Pancreas (tissue), 10 donors: ENCODE measurements at regions of chr5 and their contacts with region 1.

Region 1: GRCh38 chr5:140372971-140373487 is 13.0 kb downstream of the SLC4A9 start:
- DNase-seq: peak; percentile 59 to 74 (median 68)
- ATAC-seq: peak; percentile 84 to 98 (median 95)
- H3K4me3 ChIP-seq: no peak overlapping the region
- H3K27ac ChIP-seq: no peak overlapping the region
- H3K4me1 ChIP-seq: no peaks in the 10 kb centered on the region
- H3K27me3 ChIP-seq: no peaks in the 10 kb centered on the region
- CTCF ChIP-seq: peak; percentile 52 to 74 (median 70)

Region 2: DNA sequence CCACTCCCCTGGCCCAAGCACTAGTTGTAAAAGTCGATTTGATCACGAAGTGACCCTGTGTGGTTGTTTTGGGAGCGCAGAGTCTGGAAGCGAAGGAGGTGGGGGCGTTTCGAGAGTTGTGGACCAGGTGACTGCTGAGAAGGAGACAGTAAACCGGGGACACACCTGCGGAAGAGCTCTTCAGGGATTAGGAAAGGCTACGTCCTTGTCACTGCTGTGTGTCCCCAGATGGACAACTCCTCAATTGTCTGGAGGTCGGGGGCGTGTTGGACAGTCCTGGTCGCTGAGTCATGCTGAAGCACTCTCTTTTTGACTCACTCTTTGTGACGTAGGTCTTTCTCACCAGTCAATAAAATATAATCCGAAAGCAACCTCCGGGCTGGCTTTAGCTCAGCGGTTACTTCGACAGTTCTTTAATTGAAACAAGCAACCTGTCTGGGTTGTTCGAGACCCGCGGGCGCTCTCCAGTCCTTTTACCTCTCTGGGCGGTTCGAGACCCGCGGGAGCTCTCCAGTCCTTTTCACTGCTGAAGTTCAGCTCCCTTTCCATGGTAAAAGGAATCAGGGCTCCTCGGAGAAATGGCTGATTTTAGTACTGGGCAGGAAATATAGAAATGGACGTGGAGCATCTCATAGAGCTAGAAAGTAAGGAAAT is 338.0 kb after region 1 on chr5:
- intact Hi-C with region 1: loop called in 2 of 3 experiments (anchors 10 kb)
- DNase-seq: peak; percentile 81 to 98 (median 92)
- ATAC-seq: peak; percentile 91 to 96 (median 94)
- H3K4me3 ChIP-seq: peak overlapping the region; percentile 38 to 58 (median 50)
- H3K27ac ChIP-seq: peak overlapping the region; percentile 75 to 91 (median 86)
- H3K4me1 ChIP-seq: no peaks in the 10 kb centered on the region
- H3K27me3 ChIP-seq: no peaks in the 10 kb centered on the region
- CTCF ChIP-seq: no peak